KBM-7 (cell line): ENCODE measurements at regions of chr9 and their contacts with region 1.

Region 1: DNA sequence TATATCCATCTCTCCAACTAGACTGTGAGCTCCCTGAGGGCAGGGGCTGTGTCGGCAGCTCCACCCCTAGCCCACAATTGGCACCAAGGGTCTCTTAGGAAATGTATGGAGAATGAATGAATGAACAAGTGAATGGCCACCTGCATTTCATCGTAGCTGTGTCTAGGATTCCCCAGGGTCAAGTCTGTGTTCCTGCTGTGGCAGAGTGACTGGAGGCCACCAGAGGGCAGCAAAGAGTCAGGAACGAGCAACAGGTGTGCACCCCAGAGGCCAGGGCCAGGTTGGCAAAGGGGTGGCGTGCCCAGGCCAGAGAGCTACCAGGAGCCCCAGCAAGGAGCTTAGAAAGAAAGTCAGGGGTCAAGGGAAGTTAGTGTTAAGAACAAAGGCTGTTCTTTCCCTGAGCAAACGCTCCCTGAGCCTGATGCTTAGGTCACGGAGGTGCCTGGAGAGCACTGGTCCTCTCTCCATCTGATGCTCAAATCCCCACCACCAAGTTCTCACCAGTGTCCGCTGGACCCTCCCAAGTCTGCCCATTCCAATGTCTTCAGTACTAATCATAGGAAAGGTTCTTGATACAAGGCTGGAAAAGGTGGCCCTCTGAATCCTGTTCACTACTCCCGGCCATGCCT is 160.7 kb downstream of the PAX5 start:
- DNase-seq: peak; percentile 60

Region 2: GRCh38 chr9:36813154-36813553 is 60.2 kb before region 1 on chr9:
- in situ Hi-C with region 1: no loop called
- DNase-seq: no peak

Region 3: GRCh38 chr9:36924071-36924470 is 50.7 kb after region 1 on chr9:
- in situ Hi-C with region 1: loop called (anchors 10 kb)
- DNase-seq: no peak

Region 4: DNA sequence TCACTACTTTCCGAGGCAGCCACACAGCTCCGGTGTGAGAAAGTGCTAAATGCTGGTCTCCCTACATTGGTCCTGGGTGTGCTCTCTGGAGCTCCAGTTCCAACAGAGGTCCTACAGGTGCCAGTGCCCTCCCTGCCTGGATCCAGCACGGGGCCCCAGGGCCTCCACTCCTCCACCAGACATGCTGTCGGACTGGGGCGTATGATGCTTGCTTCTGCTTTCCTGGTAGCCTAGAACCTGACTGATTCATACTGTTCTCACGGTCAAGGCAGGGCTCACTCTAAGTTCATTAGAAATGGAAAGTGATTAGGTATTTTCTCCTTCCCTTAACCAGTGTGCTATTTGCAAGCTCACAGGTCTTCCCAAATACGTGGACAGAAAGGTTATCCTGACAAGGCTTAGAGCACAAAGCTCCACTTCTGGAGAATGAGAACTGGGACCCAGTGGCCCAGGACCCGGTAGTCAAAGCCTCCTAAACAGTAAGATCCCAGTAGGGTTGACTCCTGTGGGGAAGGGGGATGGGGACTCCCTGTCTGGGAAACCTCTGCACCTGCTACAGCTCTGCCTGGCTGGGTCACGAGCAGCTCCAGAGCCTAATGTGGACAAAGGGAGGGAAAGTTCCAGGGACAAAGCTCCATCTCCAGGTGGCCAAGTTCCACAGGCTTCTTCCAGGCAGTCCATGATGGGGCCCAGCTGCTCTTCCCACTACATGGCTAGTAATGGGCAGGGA is 62.6 kb after region 1 on chr9:
- in situ Hi-C with region 1: no loop called
- DNase-seq: no peak

Region 5: DNA sequence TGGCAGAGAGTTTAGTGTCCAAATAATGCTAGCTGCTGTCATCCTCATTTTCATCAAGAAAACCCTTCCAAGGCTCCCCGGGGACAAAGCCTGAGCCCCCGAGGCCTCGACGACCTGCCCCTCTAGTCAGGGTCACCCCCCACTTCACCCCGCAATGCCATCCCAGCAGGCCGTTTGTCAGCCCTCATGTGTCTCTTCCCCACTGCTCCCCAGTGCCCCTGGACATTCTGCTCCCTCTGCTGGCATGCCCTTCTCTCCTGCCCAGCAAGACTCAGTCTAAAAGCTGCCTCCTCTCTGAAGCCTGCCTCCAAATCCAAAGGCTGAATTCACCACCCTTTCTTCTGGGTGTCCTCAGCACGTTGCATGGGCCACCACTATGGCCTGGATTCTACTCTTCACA is 101.4 kb after region 1 on chr9:
- in situ Hi-C with region 1: loop called (anchors 10 kb)
- DNase-seq: no peak